Ovary (tissue), 10 donors: ENCODE measurements at regions of chr10 and their contacts with region 1.

Region 1: GRCh38 chr10:112949875-112950507 is at the start of gene TCF7L2:
- DNase-seq: peak; percentile 94 to 97 (median 96)
- H3K4me3 ChIP-seq: peak within 1 kb of the TSS; percentile 58
- H3K27ac ChIP-seq: peak within 1 kb of the TSS; percentile 93 to 98
- H3K4me1 ChIP-seq: peaks cover 7% of the 10 kb centered on the region
- H3K27me3 ChIP-seq: no peaks in the 10 kb centered on the region
- CTCF ChIP-seq: no peak
- EP300 ChIP-seq: no peak
- POLR2A ChIP-seq: peak; percentile 56
- total RNA-seq, gene TCF7L2: 21.1 to 39.2 (median 34.5) TPM

Region 2: DNA sequence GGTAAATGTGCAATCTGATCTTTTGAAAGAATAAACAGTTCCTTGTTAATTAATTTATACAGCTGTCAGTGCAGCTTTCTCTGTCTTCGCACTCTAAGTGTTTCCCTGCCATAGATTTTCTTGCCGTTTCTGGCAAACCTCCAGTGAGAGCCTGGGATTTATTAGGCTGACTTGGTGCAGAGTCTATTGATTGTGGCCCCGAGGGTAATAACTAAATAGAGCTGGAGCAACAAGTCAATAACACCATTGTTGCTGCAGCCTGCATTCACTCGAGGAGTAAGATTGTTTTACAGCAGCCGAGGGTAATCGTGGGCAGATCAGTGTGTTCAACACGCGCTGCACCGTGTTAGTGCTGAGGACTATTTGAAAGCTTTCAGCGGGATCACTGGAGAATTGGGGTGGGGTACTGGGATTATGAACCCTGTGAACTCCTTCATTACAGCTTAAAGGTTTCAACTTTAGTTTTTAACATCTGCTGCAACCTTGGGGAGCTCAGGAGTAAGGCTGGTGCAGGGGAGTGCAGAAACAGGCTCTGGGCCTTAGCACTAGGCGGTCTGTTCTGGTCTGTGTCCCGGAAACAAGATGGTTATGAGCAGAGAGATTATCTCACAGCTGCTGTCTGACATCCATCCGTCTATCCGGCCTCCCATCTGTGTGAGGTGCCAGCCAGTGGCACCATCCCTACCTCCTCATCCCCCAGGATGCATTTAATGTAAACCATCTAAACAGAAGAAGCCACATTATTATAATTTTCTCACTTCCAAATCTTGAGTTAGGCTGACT is 173.9 kb before region 1 on chr10:
- intact Hi-C with region 1: no loop called
- DNase-seq: no peak
- H3K4me3 ChIP-seq: no peak overlapping the region
- H3K27ac ChIP-seq: no peak overlapping the region
- H3K4me1 ChIP-seq: peaks cover 4% of the 10 kb centered on the region
- H3K27me3 ChIP-seq: no peaks in the 10 kb centered on the region
- CTCF ChIP-seq: no peak
- EP300 ChIP-seq: no peak
- POLR2A ChIP-seq: no peak

Region 3: GRCh38 chr10:113052076-113052830 is 102.3 kb after region 1 on chr10:
- intact Hi-C with region 1: loop called in 2 of 4 experiments (anchors 5 to 10 kb)
- DNase-seq: no peak
- H3K4me3 ChIP-seq: no peak overlapping the region
- H3K27ac ChIP-seq: peak overlapping the region in 1 of 2 donors; percentile 22
- H3K4me1 ChIP-seq: peaks cover 50% of the 10 kb centered on the region
- H3K27me3 ChIP-seq: no peaks in the 10 kb centered on the region
- CTCF ChIP-seq: no peak
- EP300 ChIP-seq: no peak
- POLR2A ChIP-seq: no peak

Region 4: GRCh38 chr10:113093188-113094113 is 143.5 kb after region 1 on chr10:
- intact Hi-C with region 1: loop called in 1 of 4 experiments (anchors 10 kb)
- DNase-seq: no peak
- H3K4me3 ChIP-seq: no peak overlapping the region
- H3K27ac ChIP-seq: no peak overlapping the region
- H3K4me1 ChIP-seq: peaks cover 4% of the 10 kb centered on the region
- H3K27me3 ChIP-seq: no peaks in the 10 kb centered on the region
- CTCF ChIP-seq: no peak
- EP300 ChIP-seq: no peak
- POLR2A ChIP-seq: no peak

Region 5: DNA sequence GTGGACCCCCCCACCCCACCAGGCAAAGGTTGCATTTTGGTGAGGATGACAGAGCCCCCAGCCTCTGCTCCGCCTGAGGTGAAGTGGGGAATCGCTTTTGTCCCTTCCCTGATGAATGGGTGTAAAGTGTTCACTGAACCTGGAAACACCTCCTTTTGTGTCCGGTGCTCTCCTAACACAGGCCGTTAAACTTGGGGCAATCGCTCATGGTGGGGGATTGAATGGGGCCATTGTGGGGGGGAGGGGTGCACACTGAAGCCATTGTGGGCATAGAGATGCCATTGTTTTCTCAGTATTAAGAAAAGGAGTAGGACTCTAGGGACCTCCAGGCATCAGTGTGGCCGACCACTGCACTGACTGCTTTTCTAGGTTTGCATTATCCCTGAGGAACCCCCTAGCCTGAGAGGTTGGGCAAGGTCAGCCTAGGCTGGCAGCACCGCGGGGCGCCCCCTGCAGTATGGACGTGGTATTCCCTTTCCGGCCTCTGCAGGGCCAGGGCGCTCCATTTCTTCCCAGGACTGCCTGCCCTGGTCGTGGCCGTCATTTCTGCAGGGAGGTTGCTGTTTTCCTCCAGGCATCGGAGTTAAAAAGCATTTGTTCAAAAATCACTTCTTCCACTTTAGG is 158.3 kb after region 1 on chr10:
- intact Hi-C with region 1: loop called in 2 of 4 experiments (anchors 10 kb)
- DNase-seq: no peak
- H3K4me3 ChIP-seq: no peak overlapping the region
- H3K27ac ChIP-seq: no peak overlapping the region
- H3K4me1 ChIP-seq: peaks cover 19% of the 10 kb centered on the region
- H3K27me3 ChIP-seq: no peaks in the 10 kb centered on the region
- CTCF ChIP-seq: no peak
- EP300 ChIP-seq: no peak
- POLR2A ChIP-seq: no peak

Region 6: GRCh38 chr10:113126229-113127201 is 176.5 kb after region 1 on chr10:
- intact Hi-C with region 1: loop called in 1 of 4 experiments (anchors 5 kb)
- DNase-seq: peak; percentile 59 to 82 (median 74)
- H3K4me3 ChIP-seq: peak overlapping the region; percentile 27
- H3K27ac ChIP-seq: no peak overlapping the region
- H3K4me1 ChIP-seq: peaks cover 5% of the 10 kb centered on the region
- H3K27me3 ChIP-seq: no peaks in the 10 kb centered on the region
- CTCF ChIP-seq: peak; percentile 51 to 66 (median 64)
- EP300 ChIP-seq: no peak
- POLR2A ChIP-seq: no peak